ENCODE measurements at regions of chr1 and their contacts with region 1.

Region 1: DNA sequence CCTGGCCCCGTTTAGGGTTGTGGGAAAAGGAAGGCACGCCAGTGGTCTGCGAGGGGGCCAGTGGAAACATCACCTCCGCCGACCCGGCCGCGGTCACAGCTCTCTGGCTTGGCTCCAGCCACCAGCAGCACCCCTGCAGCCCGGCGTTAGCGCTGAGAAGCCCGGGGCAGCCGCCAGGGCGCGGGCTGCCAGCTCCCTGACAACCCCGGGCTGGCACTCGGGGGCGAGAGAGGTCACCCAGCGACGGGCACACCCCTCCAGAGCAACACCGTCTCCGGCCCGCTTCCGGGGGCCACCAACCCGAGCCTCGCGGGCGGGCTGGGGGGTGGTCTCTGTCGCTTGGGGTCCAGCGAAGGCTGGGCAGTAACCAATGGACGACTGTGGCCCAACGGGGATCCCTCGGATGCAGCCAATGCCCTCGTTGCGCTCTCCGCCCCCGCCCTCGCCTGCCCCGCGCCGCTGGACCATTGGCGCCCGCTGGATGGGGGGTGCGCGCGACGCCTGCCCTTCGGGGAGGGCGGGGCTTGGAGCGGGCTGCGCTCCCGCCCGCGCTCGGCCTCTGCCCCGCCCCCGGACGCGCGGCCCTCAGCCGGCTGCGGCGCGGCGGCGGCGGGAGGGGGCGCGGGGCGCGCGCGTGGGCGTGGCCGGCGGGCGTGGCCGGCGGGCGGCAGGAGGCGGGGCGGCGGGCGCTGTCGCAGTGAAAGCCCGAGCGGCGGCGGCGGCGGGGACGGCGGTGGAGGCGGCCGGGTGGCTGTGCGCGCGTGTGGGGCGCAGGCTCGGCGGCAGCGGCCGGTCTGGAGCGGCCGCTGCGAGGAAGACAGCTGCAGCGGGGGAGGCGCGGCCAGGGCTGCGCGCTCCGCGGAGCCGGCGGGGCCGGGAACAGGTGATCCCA is at the start of gene MAN1C1:
- DNase-seq: peak; percentile 91
- H3K4me3 ChIP-seq: peak within 1 kb of the TSS; percentile 96
- H3K27ac ChIP-seq: peak within 1 kb of the TSS; percentile 87
- H3K4me1 ChIP-seq: peaks cover 58% of the 10 kb centered on the region
- H3K27me3 ChIP-seq: no peaks in the 10 kb centered on the region
- CTCF ChIP-seq: peak; percentile 66
- total RNA-seq, gene MAN1C1: 18.0 TPM

Region 2: GRCh38 chr1:25692560-25692959 is 76.2 kb after region 1 on chr1:
- intact Hi-C with region 1: loop called (anchors 5 kb)
- DNase-seq: no peak
- H3K4me3 ChIP-seq: no peak overlapping the region
- H3K27ac ChIP-seq: no peak overlapping the region
- H3K4me1 ChIP-seq: peaks cover 70% of the 10 kb centered on the region
- H3K27me3 ChIP-seq: no peaks in the 10 kb centered on the region
- CTCF ChIP-seq: peak; percentile 54

Region 3: DNA sequence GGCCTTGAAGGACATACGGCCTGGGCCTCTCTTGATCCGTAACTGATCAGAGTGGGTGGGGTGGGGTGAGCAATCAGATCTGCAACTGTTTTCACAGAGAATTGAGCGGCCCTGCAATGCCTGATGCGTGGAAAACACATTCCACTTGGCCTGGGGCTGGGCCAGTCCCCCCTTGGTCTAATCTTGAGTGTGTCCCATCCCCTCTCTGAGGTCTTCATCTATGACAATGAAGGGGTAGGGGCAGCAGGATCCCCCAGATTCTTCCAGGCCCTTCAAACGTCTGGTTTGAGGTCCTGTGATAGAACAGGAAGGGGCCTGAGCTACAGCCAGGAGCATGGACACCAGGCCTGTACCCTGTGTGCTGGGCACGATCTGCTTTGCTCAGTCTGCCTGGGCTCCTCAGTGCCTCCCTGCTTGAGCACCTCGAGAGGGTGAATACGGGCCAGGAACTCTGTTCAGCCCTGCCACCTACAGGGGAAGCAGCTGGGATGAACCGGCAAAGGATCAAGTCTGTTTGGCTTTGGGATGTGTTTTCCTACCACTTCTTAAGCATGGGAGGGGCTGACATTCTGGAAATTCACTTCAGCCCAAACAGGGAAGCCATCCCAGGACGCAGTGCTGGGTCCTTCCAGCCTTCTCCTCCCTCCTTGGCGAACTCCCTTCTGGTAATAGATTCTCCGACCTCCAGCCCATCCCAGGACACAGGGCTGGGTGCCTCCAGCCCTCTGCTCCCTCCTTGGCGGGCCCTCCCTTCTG is 127.7 kb after region 1 on chr1:
- intact Hi-C with region 1: loop called (anchors 10 kb)
- DNase-seq: peak; percentile 73
- H3K4me3 ChIP-seq: peak overlapping the region; percentile 20
- H3K27ac ChIP-seq: peak overlapping the region; percentile 97
- H3K4me1 ChIP-seq: peaks cover 55% of the 10 kb centered on the region
- H3K27me3 ChIP-seq: no peaks in the 10 kb centered on the region
- CTCF ChIP-seq: peak; percentile 70

Measured in left ventricle myocardium inferior (tissue), 1 donor.